Activated CD4-positive, alpha-beta T cell treated with anti-CD3 and anti-CD28 coated beads, Interleukin-2, amount 10 ng/mL, durations not matched to agents 24 days and 14 days (primary cell): ENCODE measurements at regions of chr12 and their contacts with region 1.

Region 1: DNA sequence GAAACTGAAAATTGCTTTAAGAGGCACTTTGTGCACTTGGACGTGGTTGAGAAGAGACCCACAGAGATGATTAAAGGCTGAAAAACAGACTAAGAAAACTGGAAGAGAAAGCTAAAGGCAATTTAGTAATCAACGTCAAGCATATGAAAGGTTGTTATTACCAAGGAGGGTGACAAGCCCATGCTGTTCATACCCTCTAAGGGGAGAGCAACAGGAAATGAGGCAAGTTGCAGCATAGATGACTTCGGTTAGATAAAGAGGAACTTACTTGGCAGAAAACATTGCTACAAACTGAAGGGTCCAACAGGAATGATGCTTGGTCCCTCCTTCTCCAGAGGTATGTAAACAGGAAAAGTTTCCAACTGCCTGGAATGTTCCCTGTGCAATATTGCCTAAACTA is 107.8 kb downstream of the DUSP6 start:
- DNase-seq: peak; percentile 82
- H3K4me3 Mint-ChIP-seq: peak overlapping the region; percentile 52
- H3K27ac Mint-ChIP-seq: peak overlapping the region; percentile 84
- H3K4me1 Mint-ChIP-seq: peaks cover 45% of the 10 kb centered on the region
- H3K27me3 Mint-ChIP-seq: no peaks in the 10 kb centered on the region

Region 2: GRCh38 chr12:88854260-88854659 is 390.3 kb before region 1 on chr12:
- intact Hi-C with region 1: no loop called
- DNase-seq: no peak
- H3K4me3 Mint-ChIP-seq: no peak overlapping the region
- H3K27ac Mint-ChIP-seq: no peak overlapping the region
- H3K4me1 Mint-ChIP-seq: no peaks in the 10 kb centered on the region
- H3K27me3 Mint-ChIP-seq: no peaks in the 10 kb centered on the region

Region 3: DNA sequence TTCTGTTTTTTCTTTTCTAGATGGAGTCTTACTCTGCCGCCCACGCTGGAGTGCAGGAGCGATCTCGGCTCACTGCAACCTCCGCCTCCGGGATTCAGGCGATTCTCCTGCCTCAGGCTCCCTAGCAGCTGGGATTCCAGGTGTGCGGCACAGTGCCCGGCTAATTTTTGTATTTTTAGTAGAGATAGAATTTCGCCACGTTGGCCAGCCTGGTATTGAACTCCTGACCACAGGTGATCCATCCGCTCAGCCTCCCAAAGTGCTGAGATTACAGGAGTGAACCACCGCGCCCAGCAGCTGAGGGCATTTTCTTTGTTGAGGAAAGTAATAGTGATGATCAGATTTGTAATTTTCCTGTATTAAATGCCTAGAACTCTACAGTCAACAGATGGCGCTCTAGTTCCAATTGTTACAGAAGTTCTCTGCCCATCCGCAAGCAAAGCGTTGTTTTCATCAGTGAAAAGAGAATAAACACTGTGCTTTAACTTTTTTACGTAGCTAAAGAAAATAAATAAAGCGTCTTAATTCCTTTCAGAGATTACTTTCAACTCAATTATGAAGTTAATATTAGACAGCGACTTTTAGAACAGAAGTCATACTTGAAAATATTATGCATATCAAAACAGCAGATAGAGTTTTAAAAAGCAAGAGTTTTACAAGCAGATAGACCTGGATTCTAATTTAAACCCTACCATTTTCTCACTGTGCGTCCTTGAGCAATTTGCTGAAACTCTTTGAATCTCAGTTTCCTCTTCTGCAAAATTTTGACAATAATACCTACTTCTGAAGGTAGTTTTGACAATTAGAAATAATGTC is 227.4 kb before region 1 on chr12:
- intact Hi-C with region 1: no loop called
- DNase-seq: peak; percentile 86
- H3K4me3 Mint-ChIP-seq: peak overlapping the region; percentile 48
- H3K27ac Mint-ChIP-seq: no peak overlapping the region
- H3K4me1 Mint-ChIP-seq: peaks cover 12% of the 10 kb centered on the region
- H3K27me3 Mint-ChIP-seq: peaks cover 14% of the 10 kb centered on the region

Region 4: GRCh38 chr12:89156862-89157262 is 87.7 kb before region 1 on chr12:
- intact Hi-C with region 1: loop called (anchors 1 kb)
- DNase-seq: no peak
- H3K4me3 Mint-ChIP-seq: peak overlapping the region; percentile 34
- H3K27ac Mint-ChIP-seq: peak overlapping the region; percentile 74
- H3K4me1 Mint-ChIP-seq: peaks cover 23% of the 10 kb centered on the region
- H3K27me3 Mint-ChIP-seq: no peaks in the 10 kb centered on the region

Region 5: DNA sequence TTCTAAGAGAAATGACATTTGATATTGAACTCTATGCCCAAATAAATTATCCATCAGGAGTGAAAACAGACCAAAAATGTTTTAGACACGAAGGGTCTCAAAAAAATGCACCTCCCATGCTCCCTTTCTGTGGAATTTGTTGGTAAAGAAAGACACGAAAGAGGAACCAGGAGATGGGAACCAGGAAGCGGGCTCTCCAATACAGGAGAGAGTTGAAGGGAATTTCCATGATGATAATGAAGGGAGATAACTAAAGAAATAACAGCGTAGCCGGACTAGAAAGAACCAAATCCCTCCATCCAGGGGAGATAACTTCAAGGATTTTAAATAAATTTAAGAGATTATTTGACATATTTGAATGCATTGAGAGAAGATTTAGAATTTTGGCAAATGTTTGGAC is 75.2 kb before region 1 on chr12:
- intact Hi-C with region 1: no loop called
- DNase-seq: no peak
- H3K4me3 Mint-ChIP-seq: no peak overlapping the region
- H3K27ac Mint-ChIP-seq: no peak overlapping the region
- H3K4me1 Mint-ChIP-seq: peaks cover 34% of the 10 kb centered on the region
- H3K27me3 Mint-ChIP-seq: no peaks in the 10 kb centered on the region

Region 6: DNA sequence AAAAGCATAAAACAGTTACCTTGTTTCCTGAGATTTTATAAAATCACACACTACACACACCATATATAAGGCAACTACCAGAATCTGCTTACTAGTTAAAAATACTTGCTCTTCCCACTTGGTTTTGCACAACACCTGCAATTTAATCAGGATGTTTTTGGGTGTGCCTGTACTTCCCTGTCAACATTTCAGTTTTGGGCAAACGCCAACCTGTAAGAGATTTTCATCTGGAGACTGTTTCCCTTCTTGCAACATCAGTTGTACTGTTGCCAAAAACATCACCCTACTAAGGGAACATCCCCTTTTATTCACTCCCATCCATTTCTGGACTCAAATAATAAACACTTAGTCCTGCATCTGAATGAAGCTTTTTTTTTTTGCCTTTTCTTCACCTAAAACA is 64.6 kb before region 1 on chr12:
- intact Hi-C with region 1: loop called (anchors 1 kb)
- DNase-seq: no peak
- H3K4me3 Mint-ChIP-seq: peak overlapping the region; percentile 38
- H3K27ac Mint-ChIP-seq: peak overlapping the region; percentile 81
- H3K4me1 Mint-ChIP-seq: peaks cover 51% of the 10 kb centered on the region
- H3K27me3 Mint-ChIP-seq: no peaks in the 10 kb centered on the region

Region 7: GRCh38 chr12:89261982-89262381 is 17.4 kb after region 1 on chr12:
- intact Hi-C with region 1: loop called (anchors 1 kb)
- DNase-seq: no peak
- H3K4me3 Mint-ChIP-seq: no peak overlapping the region
- H3K27ac Mint-ChIP-seq: no peak overlapping the region
- H3K4me1 Mint-ChIP-seq: peaks cover 25% of the 10 kb centered on the region
- H3K27me3 Mint-ChIP-seq: no peaks in the 10 kb centered on the region

Region 8: GRCh38 chr12:89280833-89281538 is 36.5 kb after region 1 on chr12:
- intact Hi-C with region 1: loop called (anchors 5 kb)
- DNase-seq: peak; percentile 76
- H3K4me3 Mint-ChIP-seq: peak overlapping the region; percentile 71
- H3K27ac Mint-ChIP-seq: peak overlapping the region; percentile 89
- H3K4me1 Mint-ChIP-seq: peaks cover 28% of the 10 kb centered on the region
- H3K27me3 Mint-ChIP-seq: no peaks in the 10 kb centered on the region

Region 9: DNA sequence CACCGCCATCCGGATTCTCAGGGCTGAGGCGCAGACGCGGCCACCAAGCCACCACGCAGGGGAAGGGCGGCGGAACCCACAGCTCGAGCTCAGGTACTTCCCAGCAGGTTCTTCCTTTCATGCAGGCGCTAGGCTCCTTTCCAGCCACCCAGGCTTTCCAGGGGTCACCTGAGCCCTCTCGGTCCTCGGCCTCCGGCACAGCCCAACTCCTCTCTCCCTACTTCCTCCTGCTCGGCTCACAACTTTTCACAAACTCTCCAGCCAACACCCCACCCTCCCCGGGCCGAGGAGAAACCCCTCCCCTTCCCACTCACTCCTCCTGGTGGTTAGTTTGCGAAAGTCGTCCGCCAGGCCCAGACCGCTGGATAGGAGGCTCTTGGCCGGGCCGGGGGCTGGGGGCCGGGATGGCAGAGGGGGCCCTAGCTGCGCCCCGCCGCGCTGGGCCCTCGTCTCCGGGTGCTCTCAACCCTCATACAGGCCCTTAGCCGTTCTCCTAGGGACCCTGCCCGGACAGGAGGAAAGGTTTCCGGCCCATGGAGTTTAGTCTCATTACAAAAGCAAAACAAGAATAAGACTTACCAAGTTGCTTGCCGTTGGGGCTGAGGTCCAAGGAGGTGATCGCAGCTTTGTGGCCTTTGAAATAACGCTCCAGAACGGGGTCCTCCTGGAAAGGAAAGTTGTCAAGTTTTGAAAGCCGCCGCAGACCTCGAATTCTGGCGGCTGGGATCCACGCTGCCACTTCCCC is 280.2 kb after region 1 on chr12 and contains the start of gene GALNT4:
- intact Hi-C with region 1: loop called (anchors 5 kb)
- DNase-seq: peak; percentile 94
- H3K4me3 Mint-ChIP-seq: peak within 1 kb of the TSS; percentile 98
- H3K27ac Mint-ChIP-seq: peak within 1 kb of the TSS; percentile 99
- H3K4me1 Mint-ChIP-seq: peaks cover 49% of the 10 kb centered on the region
- H3K27me3 Mint-ChIP-seq: no peaks in the 10 kb centered on the region
- total RNA-seq, gene GALNT4: 6.9 and 7.6 TPM in 2 replicates

Region 10: DNA sequence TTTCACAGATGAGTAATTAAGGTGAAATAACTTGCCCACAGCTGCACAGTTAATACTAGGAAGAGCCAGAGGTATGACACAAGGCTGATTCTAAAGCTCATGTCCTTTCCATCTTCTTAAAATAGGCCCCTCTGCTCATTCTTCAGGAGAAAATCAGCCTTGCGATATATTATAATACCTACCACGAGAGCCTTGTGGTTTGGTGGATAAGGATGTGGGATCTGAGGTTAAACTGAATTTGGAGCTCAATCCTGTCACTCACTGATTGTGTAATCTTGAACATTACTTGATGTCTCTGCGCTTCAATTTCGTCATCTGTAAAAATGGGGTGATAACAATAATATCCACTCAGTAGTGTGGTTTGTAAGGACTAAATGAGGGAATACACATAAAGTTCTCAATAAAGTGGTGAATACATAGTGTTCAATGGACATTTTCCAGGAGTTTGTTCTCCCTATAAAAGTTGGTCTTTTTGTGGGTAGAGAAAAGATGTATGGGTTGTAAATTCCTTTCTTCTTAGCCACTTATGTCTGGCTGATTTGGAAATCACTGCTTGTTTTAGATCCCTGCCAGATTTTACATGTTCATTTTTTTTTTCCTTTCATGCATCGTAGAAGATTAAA is 489.2 kb after region 1 on chr12:
- intact Hi-C with region 1: no loop called
- DNase-seq: no peak
- H3K4me3 Mint-ChIP-seq: no peak overlapping the region
- H3K27ac Mint-ChIP-seq: no peak overlapping the region
- H3K4me1 Mint-ChIP-seq: peaks cover 7% of the 10 kb centered on the region
- H3K27me3 Mint-ChIP-seq: no peaks in the 10 kb centered on the region